ENCODE measurements at regions of chr7 and their contacts with region 1.

Region 1: GRCh38 chr7:24819916-24820689 is 62.8 kb upstream of the GSDME start:
- H3K4me3 ChIP-seq: no peak overlapping the region
- H3K27ac ChIP-seq: no peak overlapping the region
- H3K4me1 ChIP-seq: 0 out of 2 replicates have a peak, but pooled peaks cover 4% of the 10 kb centered on the region
- CTCF ChIP-seq: peak; percentile 48; the same call in 1 of the 2 replicates

Region 2: DNA sequence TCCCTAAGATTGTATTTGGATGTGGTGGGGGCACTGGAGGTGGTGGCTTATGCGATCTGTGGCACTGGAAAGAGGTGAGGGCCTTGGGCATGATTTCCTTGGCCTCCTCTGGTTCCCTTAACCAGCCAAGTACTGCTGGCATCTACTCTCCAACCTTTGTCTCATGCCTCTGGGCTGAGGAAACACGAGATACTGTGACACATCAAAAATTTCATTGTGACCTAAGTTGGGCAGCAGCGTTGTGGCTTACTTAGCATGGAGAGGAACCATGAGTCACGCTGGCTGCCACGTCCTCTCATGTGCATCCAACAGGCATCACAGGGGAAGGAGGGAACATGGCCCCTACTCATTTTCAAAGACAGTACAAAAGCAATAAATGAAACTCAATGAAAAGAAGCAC is 33.2 kb before region 1 on chr7:
- CTCF ChIA-PET with region 1: no interaction called
- POLR2A ChIA-PET with region 1: no interaction called
- H3K4me3 ChIP-seq: no peak overlapping the region
- H3K27ac ChIP-seq: no peak overlapping the region
- H3K4me1 ChIP-seq: no peaks in the 10 kb centered on the region
- CTCF ChIP-seq: no peak

Region 3: DNA sequence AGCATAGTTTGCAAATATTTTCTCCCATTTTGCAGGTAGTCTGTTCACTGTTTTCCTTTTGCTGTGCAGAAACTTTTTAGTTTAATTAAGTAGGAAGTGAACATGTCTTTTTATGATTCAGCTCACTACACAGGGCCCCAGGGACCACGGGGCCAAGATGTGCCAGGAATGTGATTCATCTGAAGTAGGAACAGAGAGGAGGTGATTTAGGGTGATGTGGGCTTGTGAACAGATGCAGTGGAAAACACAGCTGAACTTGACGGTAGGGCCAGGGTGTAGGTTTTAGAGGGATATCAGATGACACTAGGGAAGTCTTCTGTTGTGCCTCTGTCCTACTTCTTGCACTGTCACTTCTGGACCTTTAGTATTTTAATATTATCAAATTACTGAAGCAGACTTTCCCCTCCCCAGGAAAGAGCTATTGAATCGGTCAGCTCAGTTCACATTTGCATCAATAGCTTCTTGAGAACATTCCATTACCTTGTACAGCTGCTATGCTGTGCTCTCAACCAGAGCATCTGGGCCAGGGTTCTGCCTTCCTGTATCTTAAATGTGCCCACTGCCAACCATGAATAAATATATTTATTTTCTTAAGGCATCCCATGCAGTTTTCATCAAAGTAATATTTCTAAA is 63.0 kb after region 1 on chr7:
- CTCF ChIA-PET with region 1: interaction called, 10 read pairs
- POLR2A ChIA-PET with region 1: no interaction called
- H3K4me3 ChIP-seq: no peak overlapping the region
- H3K27ac ChIP-seq: no peak overlapping the region
- H3K4me1 ChIP-seq: peaks cover 32% of the 10 kb centered on the region
- CTCF ChIP-seq: no peak

Region 4: DNA sequence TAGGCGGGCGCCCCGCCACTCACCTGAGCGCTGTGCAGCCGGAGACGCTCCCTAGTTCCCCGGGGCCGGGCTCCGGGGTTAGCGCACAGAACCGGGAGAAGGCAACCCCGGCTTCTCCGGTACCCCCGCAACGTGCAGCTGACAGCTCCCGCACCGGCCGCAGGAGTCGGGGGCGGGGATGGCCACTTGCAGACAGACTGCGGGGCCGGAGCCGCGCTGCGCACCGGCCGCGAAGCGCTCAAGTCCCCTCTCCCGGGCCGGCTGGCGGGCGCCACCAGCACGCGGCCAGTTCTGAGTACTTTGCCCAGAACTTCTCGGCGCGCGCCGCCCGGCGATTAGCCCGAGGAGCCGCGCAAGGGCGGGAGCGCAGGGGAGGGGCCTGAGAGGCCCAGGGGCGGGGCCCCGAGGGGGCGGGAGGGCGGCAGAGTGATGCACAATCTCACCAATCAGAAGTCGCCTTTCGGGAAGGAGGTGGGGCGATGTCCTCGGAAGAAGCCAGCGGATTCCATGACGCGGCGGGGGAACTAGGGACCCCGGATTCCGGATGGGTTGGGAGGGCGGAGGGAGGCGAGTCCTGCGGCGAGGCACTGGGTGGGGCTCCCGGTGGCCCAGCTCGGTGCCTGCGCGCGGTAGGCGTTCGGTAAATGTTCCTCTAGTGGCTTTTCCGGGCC is 159.9 kb after region 1 on chr7 and contains the start of gene OSBPL3:
- CTCF ChIA-PET with region 1: interaction called, 14 read pairs
- POLR2A ChIA-PET with region 1: interaction called, 3 read pairs
- H3K4me3 ChIP-seq: peak within 1 kb of the TSS; percentile 81
- H3K27ac ChIP-seq: peak within 1 kb of the TSS; percentile 87
- H3K4me1 ChIP-seq: peaks cover 2% of the 10 kb centered on the region; the same call in 1 of the 2 replicates
- CTCF ChIP-seq: no peak

Region 5: DNA sequence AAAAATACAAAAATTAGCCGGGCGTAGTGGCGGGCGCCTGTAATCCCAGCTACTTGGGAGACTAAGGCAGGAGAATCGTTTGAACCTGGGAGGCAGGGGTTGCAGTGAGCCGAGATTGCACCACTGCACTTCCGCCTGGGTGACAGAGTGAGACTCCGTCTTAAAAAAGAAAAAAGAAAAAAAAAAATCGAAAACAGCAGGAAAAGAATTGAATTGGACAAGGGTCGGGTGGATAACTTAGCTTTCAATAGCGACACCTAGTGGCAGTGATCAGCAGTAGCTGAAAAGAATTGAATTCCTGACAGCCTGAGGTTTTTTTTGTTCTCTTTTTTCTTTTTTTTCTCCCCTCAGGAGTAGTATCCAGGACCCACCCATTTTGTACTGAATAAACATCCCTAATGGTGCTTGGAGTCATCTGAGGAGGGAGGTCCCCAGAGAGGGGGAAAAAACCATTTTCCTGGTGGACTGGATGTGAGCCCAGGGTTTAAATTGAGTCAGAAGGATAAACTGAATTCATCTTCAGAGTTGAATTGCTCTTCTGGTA is 249.9 kb after region 1 on chr7:
- CTCF ChIA-PET with region 1: interaction called, 13 read pairs
- POLR2A ChIA-PET with region 1: interaction called, 4 read pairs
- H3K4me3 ChIP-seq: no peak overlapping the region
- H3K27ac ChIP-seq: no peak overlapping the region; the same call in 1 of the 2 replicates
- H3K4me1 ChIP-seq: no peaks in the 10 kb centered on the region
- CTCF ChIP-seq: peak; percentile 49

Measured in HEK293 (cell line).